Common myeloid progenitor, CD34-positive (primary cell): ENCODE measurements at regions of chr15 and their contacts with region 1.

Region 1: DNA sequence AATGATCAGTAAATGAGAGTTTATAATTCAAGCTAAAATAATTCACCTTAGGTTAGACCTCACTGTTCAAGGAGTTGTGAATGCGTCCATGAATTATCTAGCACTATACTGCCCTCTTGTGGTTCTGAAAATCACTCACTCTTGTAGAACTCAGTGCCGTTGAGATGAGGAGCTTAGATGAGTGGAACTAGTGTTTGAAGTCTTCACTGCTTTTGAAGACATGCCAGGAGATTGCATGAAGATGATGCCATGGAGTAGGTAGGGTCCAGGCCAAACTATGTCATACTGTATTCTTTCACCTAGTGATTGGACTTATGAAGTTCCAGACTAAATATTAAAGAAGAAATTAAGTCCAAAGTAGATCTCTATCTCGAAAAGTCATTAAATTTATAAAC is 28.8 kb downstream of the LYSMD4 start:
- DNase-seq: peak; percentile 83 to 92 (median 88)
- H3K4me3 ChIP-seq: no peak overlapping the region
- H3K27ac ChIP-seq: no peak overlapping the region
- H3K4me1 ChIP-seq: peaks cover 2 to 13% (median 8%) of the 10 kb centered on the region in 4 experiments
- H3K27me3 ChIP-seq: no peaks in the 10 kb centered on the region

Region 2: GRCh38 chr15:99264125-99264524 is 440.3 kb before region 1 on chr15:
- CTCF ChIA-PET with region 1: interaction called, 21 read pairs
- POLR2A ChIA-PET with region 1: no interaction called
- DNase-seq: no peak
- H3K4me3 ChIP-seq: no peak overlapping the region
- H3K27ac ChIP-seq: no peak overlapping the region
- H3K4me1 ChIP-seq: peaks cover 0 to 3% (median 0%) of the 10 kb centered on the region in 4 experiments
- H3K27me3 ChIP-seq: no peaks in the 10 kb centered on the region

Region 3: GRCh38 chr15:99282121-99282520 is 422.3 kb before region 1 on chr15:
- CTCF ChIA-PET with region 1: interaction called, 67 read pairs
- POLR2A ChIA-PET with region 1: interaction called, 3 read pairs
- DNase-seq: no peak
- H3K4me3 ChIP-seq: no peak overlapping the region
- H3K27ac ChIP-seq: no peak overlapping the region
- H3K4me1 ChIP-seq: peaks cover 3 to 5% (median 3%) of the 10 kb centered on the region in 4 experiments
- H3K27me3 ChIP-seq: no peaks in the 10 kb centered on the region

Region 4: DNA sequence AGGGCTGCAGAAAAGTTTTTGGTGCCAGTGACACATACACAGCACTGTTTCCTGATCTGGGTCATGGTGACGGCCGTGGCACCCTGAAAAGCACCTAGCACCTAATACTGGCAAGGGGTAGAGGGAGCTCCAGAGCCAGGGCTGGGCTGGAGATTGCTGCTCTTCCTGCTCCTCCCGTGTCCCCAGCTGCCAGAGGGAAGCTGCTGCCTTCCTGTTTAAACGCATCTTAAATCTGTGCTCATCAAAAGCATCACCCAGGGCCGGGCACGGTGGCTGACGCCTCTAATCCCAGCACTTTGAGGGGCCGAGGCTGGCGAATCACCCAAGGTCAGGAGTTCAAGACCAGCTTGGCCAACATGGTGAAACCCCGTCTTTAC is 295.4 kb before region 1 on chr15:
- CTCF ChIA-PET with region 1: interaction called, 12 read pairs
- POLR2A ChIA-PET with region 1: no interaction called
- DNase-seq: peak; percentile 31 to 63 (median 55)
- H3K4me3 ChIP-seq: no peak overlapping the region
- H3K27ac ChIP-seq: no peak overlapping the region
- H3K4me1 ChIP-seq: peaks cover 0 to 6% (median 0%) of the 10 kb centered on the region in 4 experiments
- H3K27me3 ChIP-seq: no peaks in the 10 kb centered on the region

Region 5: DNA sequence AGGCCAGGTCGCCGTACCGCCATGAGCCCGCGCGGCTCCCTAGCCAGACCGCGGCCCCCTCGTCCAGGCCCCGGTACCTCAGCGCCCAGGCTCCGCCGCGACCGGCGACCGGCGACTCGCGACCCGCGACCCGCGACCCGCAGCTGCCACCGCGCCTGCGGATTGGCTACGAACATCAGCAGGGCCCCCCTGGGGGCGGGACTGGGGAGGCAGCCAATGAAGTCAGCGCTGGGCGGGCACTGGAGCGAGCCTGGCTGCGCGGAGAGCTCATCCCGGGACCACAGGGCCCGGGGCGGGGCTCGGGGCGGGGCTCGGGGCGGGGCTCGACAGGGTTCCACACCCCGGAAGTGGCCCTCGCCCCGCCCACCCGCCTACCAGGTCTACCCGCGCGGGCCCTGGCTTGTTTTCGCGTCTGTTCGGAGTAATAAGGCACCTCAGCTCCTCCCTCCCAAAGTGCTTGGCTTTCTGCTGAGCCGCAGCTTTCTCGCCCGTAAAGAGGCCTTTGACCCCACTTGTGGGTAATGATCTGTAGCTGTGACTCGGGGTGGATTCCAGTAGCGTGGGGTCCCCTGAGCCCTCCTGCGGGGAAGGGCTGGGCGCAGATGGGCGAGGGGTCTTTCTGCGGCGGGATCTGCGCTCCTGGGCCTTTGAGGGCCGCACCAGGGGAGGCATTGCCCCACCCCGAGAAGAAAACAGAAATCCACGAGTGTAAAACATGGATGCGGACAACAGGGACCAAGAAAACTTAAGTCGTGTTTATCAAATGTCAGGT is 29.0 kb after region 1 on chr15 and contains the start of gene LYSMD4:
- CTCF ChIA-PET with region 1: interaction called, 18 read pairs
- POLR2A ChIA-PET with region 1: no interaction called
- DNase-seq: peak; percentile 94 to 97 (median 97)
- H3K4me3 ChIP-seq: peak within 1 kb of the TSS; percentile 57 to 83 (median 78)
- H3K27ac ChIP-seq: peak within 1 kb of the TSS in 1 of 2 experiments; percentile 70
- H3K4me1 ChIP-seq: peaks cover 5 to 23% (median 14%) of the 10 kb centered on the region in 4 experiments
- H3K27me3 ChIP-seq: peaks cover 0 to 4% (median 0%) of the 10 kb centered on the region in 5 experiments

Region 6: GRCh38 chr15:99777136-99777535 is 72.7 kb after region 1 on chr15:
- CTCF ChIA-PET with region 1: no interaction called
- POLR2A ChIA-PET with region 1: no interaction called
- DNase-seq: no peak
- H3K4me3 ChIP-seq: no peak overlapping the region
- H3K27ac ChIP-seq: no peak overlapping the region
- H3K4me1 ChIP-seq: no peaks in the 10 kb centered on the region
- H3K27me3 ChIP-seq: no peaks in the 10 kb centered on the region